GM12878 (cell line): ENCODE measurements at regions of chr12 and their contacts with region 1.

Region 1: GRCh38 chr12:26119391-26119981 is 5.4 kb downstream of the BHLHE41 start:
- DNase-seq: no peak
- ATAC-seq: peak; percentile 57
- H3K4me3 ChIP-seq: no peak overlapping the region
- H3K27ac ChIP-seq: no peak overlapping the region
- H3K4me1 ChIP-seq: peaks cover 25% of the 10 kb centered on the region
- H3K27me3 ChIP-seq: peaks cover 8 to 28% of the 10 kb centered on the region in 2 experiments
- CTCF ChIP-seq: peak; percentile 40 to 57 (median 46); a peak in 5 of 6 replicates
- EP300 ChIP-seq: no peak
- POLR2A ChIP-seq: no peak
- RAD21 ChIP-seq: peak; percentile 65

Region 2: GRCh38 chr12:25958428-25959070 is 160.9 kb before region 1 on chr12 and contains the start of gene RASSF8:
- CTCF ChIA-PET with region 1: no interaction called
- POLR2A ChIA-PET with region 1: no interaction called
- RAD21 ChIA-PET with region 1: no interaction called
- SMC1A ChIA-PET with region 1: no interaction called
- in situ Hi-C with region 1: no loop called
- intact Hi-C with region 1: no loop called
- DNase-seq: no peak
- ATAC-seq: peak; percentile 91
- H3K4me3 ChIP-seq: peak within 1 kb of the TSS; percentile 60; the same call in 1 of the 2 replicates
- H3K27ac ChIP-seq: no peak within 1 kb of the TSS
- H3K4me1 ChIP-seq: no peaks in the 10 kb centered on the region
- H3K27me3 ChIP-seq: peaks cover 2 to 16% of the 10 kb centered on the region in 2 experiments
- CTCF ChIP-seq: no peak
- EP300 ChIP-seq: no peak
- POLR2A ChIP-seq: no peak
- RAD21 ChIP-seq: no peak
- polyA plus RNA-seq, gene RASSF8: not detected

Region 3: GRCh38 chr12:26011099-26011498 is 108.4 kb before region 1 on chr12:
- CTCF ChIA-PET with region 1: no interaction called
- POLR2A ChIA-PET with region 1: no interaction called
- RAD21 ChIA-PET with region 1: no interaction called
- SMC1A ChIA-PET with region 1: no interaction called
- in situ Hi-C with region 1: no loop called
- intact Hi-C with region 1: no loop called
- DNase-seq: no peak
- ATAC-seq: no peak
- H3K4me3 ChIP-seq: no peak overlapping the region
- H3K27ac ChIP-seq: no peak overlapping the region
- H3K4me1 ChIP-seq: no peaks in the 10 kb centered on the region
- H3K27me3 ChIP-seq: no peaks in the 10 kb centered on the region; a peak in 2 of 4 replicates
- CTCF ChIP-seq: no peak
- EP300 ChIP-seq: no peak
- POLR2A ChIP-seq: no peak
- RAD21 ChIP-seq: no peak

Region 4: GRCh38 chr12:26135010-26135420 is 15.5 kb after region 1 on chr12:
- CTCF ChIA-PET with region 1: interaction called, 27 read pairs
- POLR2A ChIA-PET with region 1: interaction called, 4 read pairs
- RAD21 ChIA-PET with region 1: interaction called, 3 read pairs
- SMC1A ChIA-PET with region 1: interaction called, 14 read pairs
- in situ Hi-C with region 1: no loop called
- intact Hi-C with region 1: no loop called
- DNase-seq: no peak
- ATAC-seq: no peak
- H3K4me3 ChIP-seq: no peak overlapping the region
- H3K27ac ChIP-seq: no peak overlapping the region
- H3K4me1 ChIP-seq: no peaks in the 10 kb centered on the region
- H3K27me3 ChIP-seq: peaks cover 2 to 7% of the 10 kb centered on the region in 2 experiments; a peak in 3 of 4 replicates
- CTCF ChIP-seq: no peak
- EP300 ChIP-seq: no peak
- POLR2A ChIP-seq: no peak
- RAD21 ChIP-seq: no peak

Region 5: DNA sequence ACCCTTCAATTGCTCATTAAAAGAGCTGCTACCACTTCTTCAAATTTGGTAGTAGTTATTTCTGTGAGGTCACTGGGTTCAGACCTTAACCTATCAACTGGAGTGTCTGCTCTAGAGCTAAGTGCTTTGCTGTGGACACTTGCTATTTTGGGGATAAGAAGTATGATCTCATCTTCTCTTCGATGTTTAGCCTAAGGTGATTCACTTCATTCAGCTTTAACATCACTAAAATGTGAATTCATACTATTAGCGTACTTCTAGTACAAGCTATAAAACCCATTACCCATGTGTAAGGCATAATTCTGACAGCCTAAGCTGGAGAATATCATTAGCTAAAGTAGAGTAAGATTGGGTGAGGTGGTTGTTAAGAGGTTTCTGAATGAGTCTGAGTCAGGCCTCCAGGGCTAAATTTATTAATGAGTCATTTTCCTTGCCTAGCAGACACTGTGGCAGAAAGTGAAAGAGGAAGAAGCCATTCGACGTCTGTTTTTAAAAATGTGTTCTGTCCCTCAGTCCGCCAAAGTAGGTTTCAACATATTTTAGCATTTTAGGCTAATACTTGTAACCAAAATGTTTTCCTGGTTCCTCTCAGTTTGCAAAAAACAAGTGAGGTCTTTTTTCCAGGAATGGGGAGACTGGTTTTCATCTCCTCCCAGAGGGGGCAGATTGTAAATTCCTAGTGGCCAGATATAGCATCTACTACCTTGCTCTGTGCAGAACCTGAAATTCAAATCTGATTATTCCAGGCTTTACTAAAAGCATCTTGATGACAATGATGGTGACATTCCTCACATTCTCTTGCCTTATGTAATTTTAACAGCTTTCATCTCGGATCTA is 179.5 kb after region 1 on chr12:
- CTCF ChIA-PET with region 1: interaction called, 7 read pairs
- POLR2A ChIA-PET with region 1: interaction called, 3 read pairs
- RAD21 ChIA-PET with region 1: interaction called, 16 read pairs
- SMC1A ChIA-PET with region 1: interaction called, 15 read pairs
- in situ Hi-C with region 1: no loop called
- intact Hi-C with region 1: no loop called
- DNase-seq: peak; percentile 91
- ATAC-seq: peak; percentile 98
- H3K4me3 ChIP-seq: 0 out of 2 replicates have a peak overlapping the region, but pooled peaks have one; percentile 4
- H3K27ac ChIP-seq: peak overlapping the region; percentile 61; the same call in 1 of the 2 replicates
- H3K4me1 ChIP-seq: peaks cover 20% of the 10 kb centered on the region
- H3K27me3 ChIP-seq: no peaks in the 10 kb centered on the region; a peak in 1 of 4 replicates
- CTCF ChIP-seq: no peak
- EP300 ChIP-seq: peak; percentile 95 to 98
- POLR2A ChIP-seq: no peak
- RAD21 ChIP-seq: 0 out of 2 replicates have a peak, but pooled peaks have one; percentile 24

Region 6: DNA sequence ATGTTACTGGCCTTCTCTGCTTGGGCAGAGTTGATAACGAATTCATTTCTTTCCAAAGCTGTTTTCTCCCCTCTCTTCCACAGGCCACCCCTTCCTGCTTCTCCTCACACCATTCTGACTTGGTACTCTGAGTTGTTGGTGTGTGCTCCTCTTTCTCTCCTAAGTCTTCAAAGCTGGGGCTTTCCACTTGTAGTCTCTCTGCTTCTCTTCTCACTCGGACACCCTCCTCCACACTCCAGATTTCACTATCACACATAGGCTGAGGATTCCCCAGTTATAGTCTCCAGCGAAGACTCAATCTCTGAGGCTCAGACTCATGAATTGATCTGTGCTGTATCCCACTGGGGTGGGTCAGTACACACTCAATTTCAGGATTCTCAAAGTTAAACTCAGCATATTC is 276.9 kb after region 1 on chr12:
- CTCF ChIA-PET with region 1: interaction called, 6 read pairs
- POLR2A ChIA-PET with region 1: no interaction called
- RAD21 ChIA-PET with region 1: interaction called, 3 read pairs
- SMC1A ChIA-PET with region 1: interaction called, 11 read pairs
- in situ Hi-C with region 1: no loop called
- intact Hi-C with region 1: no loop called
- DNase-seq: peak; percentile 8
- ATAC-seq: peak; percentile 89
- H3K4me3 ChIP-seq: no peak overlapping the region
- H3K27ac ChIP-seq: peak overlapping the region; percentile 25; the same call in 1 of the 2 replicates
- H3K4me1 ChIP-seq: no peaks in the 10 kb centered on the region; the same call in 1 of the 2 replicates
- H3K27me3 ChIP-seq: no peaks in the 10 kb centered on the region
- CTCF ChIP-seq: no peak
- EP300 ChIP-seq: no peak
- POLR2A ChIP-seq: no peak
- RAD21 ChIP-seq: no peak

Region 7: GRCh38 chr12:26434299-26435068 is 315.0 kb after region 1 on chr12:
- CTCF ChIA-PET with region 1: interaction called, 16 read pairs
- POLR2A ChIA-PET with region 1: no interaction called
- RAD21 ChIA-PET with region 1: interaction called, 11 read pairs
- SMC1A ChIA-PET with region 1: interaction called, 6 read pairs
- in situ Hi-C with region 1: no loop called
- intact Hi-C with region 1: no loop called
- DNase-seq: no peak
- ATAC-seq: peak; percentile 92
- H3K4me3 ChIP-seq: no peak overlapping the region
- H3K27ac ChIP-seq: no peak overlapping the region
- H3K4me1 ChIP-seq: no peaks in the 10 kb centered on the region
- H3K27me3 ChIP-seq: no peaks in the 10 kb centered on the region
- CTCF ChIP-seq: peak; percentile 73 to 77 (median 75)
- EP300 ChIP-seq: no peak
- POLR2A ChIP-seq: no peak
- RAD21 ChIP-seq: peak; percentile 77

Region 8: GRCh38 chr12:26523708-26524150 is 404.2 kb after region 1 on chr12:
- CTCF ChIA-PET with region 1: interaction called, 10 read pairs
- POLR2A ChIA-PET with region 1: no interaction called
- RAD21 ChIA-PET with region 1: interaction called, 3 read pairs
- SMC1A ChIA-PET with region 1: interaction called, 18 read pairs
- in situ Hi-C with region 1: no loop called
- intact Hi-C with region 1: no loop called
- DNase-seq: no peak
- ATAC-seq: no peak
- H3K4me3 ChIP-seq: no peak overlapping the region
- H3K27ac ChIP-seq: no peak overlapping the region
- H3K4me1 ChIP-seq: peaks cover 2% of the 10 kb centered on the region; the same call in 1 of the 2 replicates
- H3K27me3 ChIP-seq: no peaks in the 10 kb centered on the region
- CTCF ChIP-seq: no peak
- EP300 ChIP-seq: no peak
- POLR2A ChIP-seq: no peak
- RAD21 ChIP-seq: no peak

Region 9: DNA sequence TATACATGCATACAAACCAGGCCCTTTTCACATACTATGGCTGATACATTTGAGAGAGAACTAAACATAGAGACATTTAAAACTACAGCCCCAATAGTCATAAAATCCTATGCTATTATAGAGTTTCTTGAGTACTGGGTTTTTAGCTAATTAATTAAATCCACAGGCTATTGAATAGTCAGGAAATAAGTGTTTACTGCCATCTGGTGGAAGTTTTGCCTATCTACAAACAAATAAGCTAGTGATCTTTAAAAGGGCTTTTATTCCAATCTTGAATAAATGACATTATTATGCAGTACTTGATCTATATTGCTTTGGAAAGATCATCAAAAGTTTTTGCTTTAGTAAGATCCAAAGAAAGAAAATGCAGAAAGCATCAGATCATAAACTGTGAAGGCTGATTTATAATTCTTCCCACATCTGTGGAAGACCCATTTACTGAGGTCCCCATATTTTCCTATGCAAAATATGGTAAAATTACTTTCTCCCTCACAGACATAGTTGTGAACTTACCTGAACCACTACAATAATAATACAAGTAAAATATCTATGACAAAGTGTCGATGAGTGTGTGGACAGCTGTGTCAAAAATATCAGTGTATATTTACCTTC is 582.2 kb after region 1 on chr12:
- CTCF ChIA-PET with region 1: interaction called, 10 read pairs
- POLR2A ChIA-PET with region 1: interaction called, 5 read pairs
- RAD21 ChIA-PET with region 1: interaction called, 6 read pairs
- SMC1A ChIA-PET with region 1: interaction called, 4 read pairs
- in situ Hi-C with region 1: no loop called
- intact Hi-C with region 1: no loop called
- DNase-seq: no peak
- ATAC-seq: peak; percentile 78
- H3K4me3 ChIP-seq: no peak overlapping the region
- H3K27ac ChIP-seq: no peak overlapping the region
- H3K4me1 ChIP-seq: no peaks in the 10 kb centered on the region
- H3K27me3 ChIP-seq: no peaks in the 10 kb centered on the region
- CTCF ChIP-seq: peak; percentile 14 to 53 (median 28); a peak in 3 of 6 replicates
- EP300 ChIP-seq: no peak
- POLR2A ChIP-seq: no peak
- RAD21 ChIP-seq: peak; percentile 56